Heart left ventricle (tissue), 16 donors: ENCODE measurements at regions of chr1 and their contacts with region 1.

Region 1: DNA sequence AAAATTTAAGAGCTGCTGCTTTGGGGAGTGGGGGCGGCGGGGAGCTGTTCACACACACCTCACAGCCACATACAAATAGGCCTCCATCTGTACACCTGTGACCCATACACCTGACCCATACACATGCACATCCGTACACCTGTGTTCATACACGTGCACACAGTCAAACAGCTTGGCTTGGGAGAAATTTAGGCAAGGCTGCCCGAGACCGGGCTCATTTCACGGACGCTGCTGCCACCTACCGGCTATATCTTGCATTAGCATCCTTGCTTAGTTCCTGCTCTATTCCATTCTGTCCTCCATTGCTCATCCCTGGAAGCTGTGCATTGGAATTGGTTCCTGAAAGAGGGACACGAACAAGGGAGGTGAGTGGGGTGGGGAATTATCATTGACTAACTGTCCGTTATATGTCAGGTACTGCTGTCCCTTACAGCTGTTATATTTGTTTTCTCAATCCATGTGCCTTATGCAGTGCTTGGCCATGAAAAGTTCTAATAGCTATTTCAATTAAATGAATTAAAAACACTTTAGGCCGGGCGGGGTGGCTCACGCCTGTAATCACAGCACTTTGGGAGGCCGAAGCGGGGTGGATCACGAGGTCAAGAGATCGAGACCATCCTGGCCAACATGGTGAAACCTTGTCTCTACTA is 37.1 kb upstream of the EPB41 start:
- DNase-seq: peak; percentile 60 to 82 (median 69)
- ATAC-seq: peak; percentile 49 to 86 (median 84)
- H3K4me3 ChIP-seq: no peak overlapping the region
- H3K27ac ChIP-seq: no peak overlapping the region
- H3K4me1 ChIP-seq: peaks cover 0 to 2% (median 0%) of the 10 kb centered on the region in 12 donors
- H3K27me3 ChIP-seq: peaks cover 0 to 7% (median 0%) of the 10 kb centered on the region in 9 donors
- CTCF ChIP-seq: peak; percentile 83 to 95 (median 92)
- POLR2A ChIP-seq: no peak

Region 2: DNA sequence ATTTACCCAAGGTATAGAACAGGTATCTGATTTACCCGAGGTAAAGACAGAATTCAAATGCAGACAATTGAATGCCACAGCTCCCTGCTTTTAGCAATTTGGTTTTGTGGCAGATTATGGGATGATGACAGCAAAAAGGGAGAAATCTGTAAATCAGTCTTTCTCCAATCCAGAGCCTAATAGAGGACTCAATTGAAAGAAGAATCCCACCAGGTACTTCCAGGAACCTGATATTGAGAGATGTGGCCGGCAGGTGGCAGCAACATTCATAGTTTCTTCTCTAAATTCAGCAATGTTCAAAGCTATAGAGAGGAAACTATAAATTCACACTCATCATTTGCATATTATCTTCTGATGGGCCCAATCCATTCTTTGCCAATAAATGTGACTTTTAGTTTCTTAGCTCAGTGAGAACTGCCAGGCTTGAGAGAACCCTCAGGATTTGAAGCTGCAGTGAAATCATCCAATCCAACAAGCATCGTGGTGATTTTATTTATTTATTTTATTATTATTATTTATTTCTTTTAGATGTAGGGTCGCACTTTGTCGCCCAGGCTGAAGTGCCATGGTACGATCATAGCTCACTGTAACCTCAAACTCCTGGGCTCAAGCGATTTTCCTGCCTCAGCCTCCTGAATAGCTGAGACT is 517.5 kb before region 1 on chr1:
- intact Hi-C with region 1: loop called in 2 of 10 experiments (anchors 5 to 10 kb)
- DNase-seq: peak; percentile 43 to 74 (median 64)
- ATAC-seq: peak in 2 of 4 donors; percentile 45 to 59
- H3K4me3 ChIP-seq: no peak overlapping the region
- H3K27ac ChIP-seq: no peak overlapping the region
- H3K4me1 ChIP-seq: peaks cover 0 to 2% (median 0%) of the 10 kb centered on the region in 12 donors
- H3K27me3 ChIP-seq: no peaks in the 10 kb centered on the region
- CTCF ChIP-seq: peak; percentile 52 to 78 (median 62)
- POLR2A ChIP-seq: no peak

Region 3: DNA sequence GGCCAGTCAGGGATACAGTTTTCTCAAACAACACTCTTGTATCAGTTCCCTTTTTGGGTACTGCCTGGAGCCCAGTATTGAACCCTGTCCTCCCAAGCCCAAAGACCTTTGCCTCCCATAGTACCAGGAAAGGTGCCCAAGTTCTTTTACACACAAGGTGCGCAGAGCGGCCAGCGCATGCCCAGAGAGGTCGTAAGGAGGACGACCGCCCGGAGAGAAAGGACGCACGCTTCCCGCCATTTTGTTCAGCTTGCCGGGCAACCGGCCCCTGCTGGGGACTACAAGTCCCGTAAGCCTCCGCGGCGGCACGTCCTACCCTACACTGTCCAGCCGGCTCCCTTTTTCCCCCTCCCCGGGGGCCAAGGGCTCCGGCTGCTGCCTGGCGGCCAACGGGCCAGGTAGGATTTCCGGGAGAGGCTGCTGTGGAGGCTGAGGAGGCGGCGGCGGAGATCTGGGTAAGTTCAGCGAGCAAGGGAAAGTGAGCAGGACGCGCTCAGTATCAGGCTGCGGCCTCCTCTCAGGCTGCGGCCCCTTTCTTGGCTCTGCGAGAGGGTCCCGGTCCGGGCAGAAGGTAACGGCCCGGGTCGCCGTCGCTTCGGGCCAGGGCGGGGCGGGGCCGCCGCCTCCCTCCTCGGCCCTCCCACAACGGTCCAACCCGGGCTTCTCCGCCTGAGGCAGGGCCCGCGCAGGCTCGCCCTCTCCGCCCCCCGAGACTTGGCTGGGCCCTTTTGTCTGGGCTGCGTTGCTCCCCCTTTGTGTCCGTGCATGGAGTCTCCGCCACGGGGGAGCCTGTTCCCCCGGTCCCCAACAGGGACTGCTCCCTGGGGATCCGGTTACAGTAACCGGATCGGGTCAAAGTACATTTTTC is 507.7 kb before region 1 on chr1 and contains the start of gene PHACTR4:
- intact Hi-C with region 1: loop called in 1 of 10 experiments (anchors 10 kb)
- DNase-seq: peak; percentile 93 to 96 (median 96)
- ATAC-seq: peak; percentile 97 to 99 (median 98)
- H3K4me3 ChIP-seq: peak within 1 kb of the TSS; percentile 48 to 98 (median 81)
- H3K27ac ChIP-seq: peak within 1 kb of the TSS; percentile 59 to 99 (median 94)
- H3K4me1 ChIP-seq: peaks cover 0 to 35% (median 15%) of the 10 kb centered on the region in 12 donors
- H3K27me3 ChIP-seq: no peaks in the 10 kb centered on the region
- CTCF ChIP-seq: no peak
- POLR2A ChIP-seq: peak in 1 of 2 donors; percentile 89
- total RNA-seq, gene PHACTR4: 13.6 to 30.5 (median 19.0) TPM

Region 4: GRCh38 chr1:28518000-28518744 is 359.1 kb before region 1 on chr1:
- intact Hi-C with region 1: loop called in 9 of 10 experiments (anchors 2 to 10 kb)
- DNase-seq: peak; percentile 89 to 95 (median 91)
- ATAC-seq: peak; percentile 80 to 95 (median 92)
- H3K4me3 ChIP-seq: peak overlapping the region; percentile 38 to 91 (median 74)
- H3K27ac ChIP-seq: peak overlapping the region in 11 of 12 donors; percentile 71 to 88 (median 82)
- H3K4me1 ChIP-seq: peaks cover 4 to 18% (median 10%) of the 10 kb centered on the region in 12 donors
- H3K27me3 ChIP-seq: no peaks in the 10 kb centered on the region
- CTCF ChIP-seq: peak; percentile 96 to 100 (median 98)
- POLR2A ChIP-seq: peak in 1 of 2 donors; percentile 66

Region 5: GRCh38 chr1:28526889-28527288 is 350.4 kb before region 1 on chr1:
- intact Hi-C with region 1: loop called in 1 of 10 experiments (anchors 10 kb)
- DNase-seq: no peak
- ATAC-seq: no peak
- H3K4me3 ChIP-seq: no peak overlapping the region
- H3K27ac ChIP-seq: no peak overlapping the region
- H3K4me1 ChIP-seq: no peaks in the 10 kb centered on the region
- H3K27me3 ChIP-seq: no peaks in the 10 kb centered on the region
- CTCF ChIP-seq: no peak
- POLR2A ChIP-seq: no peak

Region 6: GRCh38 chr1:28792644-28793121 is 84.6 kb before region 1 on chr1:
- intact Hi-C with region 1: loop called in 1 of 10 experiments (anchors 2 kb)
- DNase-seq: no peak
- ATAC-seq: peak in 2 of 4 donors; percentile 47 to 61
- H3K4me3 ChIP-seq: no peak overlapping the region
- H3K27ac ChIP-seq: peak overlapping the region in 1 of 12 donors; percentile 48
- H3K4me1 ChIP-seq: peaks cover 0 to 13% (median 0%) of the 10 kb centered on the region in 12 donors
- H3K27me3 ChIP-seq: peaks cover 0 to 9% (median 0%) of the 10 kb centered on the region in 9 donors
- CTCF ChIP-seq: peak in 2 of 12 donors; percentile 19 to 41
- POLR2A ChIP-seq: no peak

Region 7: DNA sequence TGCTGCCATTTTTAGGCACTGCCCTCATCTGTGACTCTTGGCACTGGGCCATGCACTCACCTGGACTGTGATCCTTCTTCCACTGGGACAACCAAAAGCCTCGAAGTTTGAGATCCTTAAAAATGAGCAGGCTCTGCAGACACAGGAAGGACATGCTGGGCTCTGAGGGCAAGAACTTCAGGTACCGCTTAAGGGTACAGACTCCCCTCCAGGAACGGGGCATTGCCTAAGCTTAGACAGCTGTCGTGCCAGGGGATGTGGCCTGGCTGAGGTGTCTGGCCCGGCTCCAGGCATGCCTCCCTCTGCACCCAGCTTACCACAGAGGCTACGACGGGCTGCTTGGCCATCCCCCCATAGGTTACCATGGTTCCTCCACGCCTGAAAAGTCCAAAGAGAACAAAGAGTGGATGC is 318.6 kb after region 1 on chr1:
- intact Hi-C with region 1: no loop called
- DNase-seq: no peak
- ATAC-seq: peak in 3 of 4 donors; percentile 9 to 40 (median 34)
- H3K4me3 ChIP-seq: no peak overlapping the region
- H3K27ac ChIP-seq: no peak overlapping the region
- H3K4me1 ChIP-seq: no peaks in the 10 kb centered on the region
- H3K27me3 ChIP-seq: no peaks in the 10 kb centered on the region
- CTCF ChIP-seq: no peak
- POLR2A ChIP-seq: no peak